ENCODE measurements at regions of chr5 and their contacts with region 1.

Region 1: DNA sequence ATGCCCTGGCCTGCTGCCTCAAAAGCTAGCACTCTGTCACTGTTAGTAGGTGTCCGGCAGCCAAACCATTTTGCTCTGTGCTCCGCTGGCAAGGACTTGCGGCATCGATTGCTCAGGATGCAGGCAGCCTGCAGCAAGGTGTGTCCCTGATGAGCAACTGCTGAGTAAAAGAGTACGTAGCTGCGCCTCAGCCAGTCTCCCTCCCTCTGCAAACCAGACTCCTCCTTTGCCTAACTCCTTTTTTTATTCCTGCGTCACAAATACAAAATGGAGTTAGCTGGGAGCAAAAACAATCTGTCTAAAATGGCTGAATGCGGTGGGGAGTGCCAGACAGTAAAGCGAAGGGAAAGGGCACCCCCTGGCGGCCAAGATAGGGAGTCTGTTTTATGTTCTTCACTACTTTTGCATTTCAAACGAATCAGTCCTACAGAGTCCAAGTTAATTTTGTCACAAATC is 61.1 kb downstream of the DIAPH1 start:
- DNase-seq: peak; percentile 100
- ATAC-seq: peak; percentile 92
- H3K4me3 ChIP-seq: peak overlapping the region; percentile 2; the same call in 1 of the 2 replicates
- H3K27ac ChIP-seq: peak overlapping the region; percentile 19
- H3K4me1 ChIP-seq: peaks cover 7% of the 10 kb centered on the region
- H3K27me3 ChIP-seq: no peaks in the 10 kb centered on the region
- CTCF ChIP-seq: peak; percentile 96
- POLR2A ChIP-seq: peak; percentile 35; the same call in 1 of the 2 replicates
- RAD21 ChIP-seq: peak; percentile 95

Region 2: GRCh38 chr5:141369994-141370848 is 187.5 kb before region 1 on chr5 and contains the start of gene PCDHGB3:
- CTCF ChIA-PET with region 1: interaction called, 7 read pairs
- POLR2A ChIA-PET with region 1: no interaction called
- dilution Hi-C with region 1: no loop called
- in situ Hi-C with region 1: no loop called
- intact Hi-C with region 1: loop called (anchors 1 kb)
- DNase-seq: peak; percentile 74
- ATAC-seq: peak; percentile 90
- H3K4me3 ChIP-seq: peak within 1 kb of the TSS; percentile 49; the same call in 1 of the 2 replicates
- H3K27ac ChIP-seq: peak within 1 kb of the TSS; percentile 52; the same call in 1 of the 2 replicates
- H3K4me1 ChIP-seq: peaks cover 2% of the 10 kb centered on the region; the same call in 1 of the 2 replicates
- H3K27me3 ChIP-seq: no peaks in the 10 kb centered on the region; the same call in 1 of the 2 replicates
- CTCF ChIP-seq: peak; percentile 65
- POLR2A ChIP-seq: no peak
- RAD21 ChIP-seq: peak; percentile 72
- total RNA-seq, gene PCDHGB3: 5.9 and 6.7 TPM in 2 replicates

Region 3: GRCh38 chr5:141412854-141413539 is 144.7 kb before region 1 on chr5 and contains the start of gene PCDHGA10:
- CTCF ChIA-PET with region 1: interaction called, 34 read pairs
- POLR2A ChIA-PET with region 1: interaction called, 4 read pairs
- dilution Hi-C with region 1: no loop called
- in situ Hi-C with region 1: loop called (anchors 5 kb)
- intact Hi-C with region 1: loop called (anchors 1 kb)
- DNase-seq: peak; percentile 80
- ATAC-seq: peak; percentile 77
- H3K4me3 ChIP-seq: peak within 1 kb of the TSS; percentile 55
- H3K27ac ChIP-seq: peak within 1 kb of the TSS; percentile 65; the same call in 1 of the 2 replicates
- H3K4me1 ChIP-seq: no peaks in the 10 kb centered on the region
- H3K27me3 ChIP-seq: no peaks in the 10 kb centered on the region
- CTCF ChIP-seq: peak; percentile 70
- POLR2A ChIP-seq: no peak
- RAD21 ChIP-seq: peak; percentile 61
- total RNA-seq, gene PCDHGA10: 6.6 and 6.9 TPM in 2 replicates

Region 4: GRCh38 chr5:141475625-141476131 is 82.0 kb before region 1 on chr5 and contains the start of gene PCDHGC3:
- CTCF ChIA-PET with region 1: interaction called, 6 read pairs
- POLR2A ChIA-PET with region 1: no interaction called
- dilution Hi-C with region 1: no loop called
- in situ Hi-C with region 1: no loop called
- intact Hi-C with region 1: loop called (anchors 1 kb)
- DNase-seq: peak; percentile 95
- ATAC-seq: peak; percentile 97
- H3K4me3 ChIP-seq: peak within 1 kb of the TSS; percentile 54
- H3K27ac ChIP-seq: peak within 1 kb of the TSS; percentile 66
- H3K4me1 ChIP-seq: peaks cover 17% of the 10 kb centered on the region
- H3K27me3 ChIP-seq: no peaks in the 10 kb centered on the region
- CTCF ChIP-seq: peak; percentile 58
- POLR2A ChIP-seq: peak; percentile 57; the same call in 1 of the 2 replicates
- RAD21 ChIP-seq: peak; percentile 61
- total RNA-seq, gene PCDHGC3: 21.1 and 21.9 TPM in 2 replicates

Region 5: DNA sequence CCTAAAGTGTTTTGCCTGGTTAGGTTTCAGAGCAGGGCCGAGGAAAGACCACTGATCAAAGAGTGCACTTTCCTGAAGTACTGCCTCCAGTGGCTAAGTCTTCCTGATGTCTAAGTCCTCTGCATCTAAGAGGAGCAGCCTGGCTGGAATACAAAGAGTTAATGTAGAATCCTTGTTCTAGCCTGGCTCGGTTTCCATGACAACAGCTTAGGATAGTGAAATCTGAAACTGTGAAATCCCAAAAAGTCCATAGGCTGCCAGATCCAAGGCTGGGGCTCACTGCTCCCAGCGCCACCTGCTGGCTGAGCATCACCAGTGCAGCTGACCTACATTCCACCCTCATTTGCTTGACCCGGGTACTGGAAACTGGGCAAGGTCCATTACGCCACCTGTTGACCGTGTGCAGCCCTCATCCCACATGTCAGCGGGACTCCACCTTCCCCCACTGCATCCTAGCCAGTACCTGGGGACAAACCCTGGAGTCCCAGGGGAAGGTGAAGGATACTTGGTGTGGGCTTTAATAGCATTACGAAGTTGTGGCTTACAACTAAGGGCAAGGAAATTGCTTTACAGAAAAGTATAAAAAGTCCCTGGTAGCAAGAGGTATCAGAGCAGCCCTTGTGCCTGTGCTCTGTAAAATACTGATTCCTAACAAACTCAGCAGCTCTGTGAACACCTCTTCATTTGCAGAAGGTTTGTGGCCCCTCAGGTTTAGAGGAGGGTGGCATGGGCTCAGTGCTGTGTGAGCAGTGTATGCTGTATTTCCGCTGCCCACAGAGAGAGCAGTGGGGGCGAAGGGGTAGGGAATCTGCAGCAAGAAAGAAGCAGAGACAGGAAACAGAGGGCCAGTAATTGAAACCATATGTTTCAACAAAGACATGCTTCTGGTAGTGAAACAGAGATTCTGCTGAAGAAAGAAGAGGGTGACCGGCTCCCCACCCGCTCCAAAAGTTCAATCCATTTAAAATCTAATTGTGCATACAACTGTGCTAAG is 32.8 kb before region 1 on chr5:
- CTCF ChIA-PET with region 1: interaction called, 24 read pairs
- POLR2A ChIA-PET with region 1: interaction called, 10 read pairs
- dilution Hi-C with region 1: no loop called
- in situ Hi-C with region 1: no loop called
- intact Hi-C with region 1: loop called (anchors 1 kb)
- DNase-seq: peak; percentile 97
- ATAC-seq: peak; percentile 71
- H3K4me3 ChIP-seq: no peak overlapping the region
- H3K27ac ChIP-seq: peak overlapping the region; percentile 83
- H3K4me1 ChIP-seq: peaks cover 37% of the 10 kb centered on the region
- H3K27me3 ChIP-seq: no peaks in the 10 kb centered on the region
- CTCF ChIP-seq: peak; percentile 99; the same call in 1 of the 2 replicates
- POLR2A ChIP-seq: peak; percentile 52; the same call in 1 of the 2 replicates
- RAD21 ChIP-seq: peak; percentile 95

Region 6: GRCh38 chr5:141598391-141599350 is 41.0 kb after region 1 on chr5:
- CTCF ChIA-PET with region 1: no interaction called
- POLR2A ChIA-PET with region 1: no interaction called
- dilution Hi-C with region 1: no loop called
- in situ Hi-C with region 1: no loop called
- intact Hi-C with region 1: no loop called
- DNase-seq: peak; percentile 57
- ATAC-seq: peak; percentile 53
- H3K4me3 ChIP-seq: no peak overlapping the region
- H3K27ac ChIP-seq: no peak overlapping the region
- H3K4me1 ChIP-seq: peaks cover under 1% of the 10 kb centered on the region; the same call in 1 of the 2 replicates
- H3K27me3 ChIP-seq: no peaks in the 10 kb centered on the region
- CTCF ChIP-seq: no peak
- POLR2A ChIP-seq: no peak
- RAD21 ChIP-seq: no peak

Measured in IMR-90 (cell line).